ENCODE measurements at regions of chr10 and their contacts with region 1.

Region 1: DNA sequence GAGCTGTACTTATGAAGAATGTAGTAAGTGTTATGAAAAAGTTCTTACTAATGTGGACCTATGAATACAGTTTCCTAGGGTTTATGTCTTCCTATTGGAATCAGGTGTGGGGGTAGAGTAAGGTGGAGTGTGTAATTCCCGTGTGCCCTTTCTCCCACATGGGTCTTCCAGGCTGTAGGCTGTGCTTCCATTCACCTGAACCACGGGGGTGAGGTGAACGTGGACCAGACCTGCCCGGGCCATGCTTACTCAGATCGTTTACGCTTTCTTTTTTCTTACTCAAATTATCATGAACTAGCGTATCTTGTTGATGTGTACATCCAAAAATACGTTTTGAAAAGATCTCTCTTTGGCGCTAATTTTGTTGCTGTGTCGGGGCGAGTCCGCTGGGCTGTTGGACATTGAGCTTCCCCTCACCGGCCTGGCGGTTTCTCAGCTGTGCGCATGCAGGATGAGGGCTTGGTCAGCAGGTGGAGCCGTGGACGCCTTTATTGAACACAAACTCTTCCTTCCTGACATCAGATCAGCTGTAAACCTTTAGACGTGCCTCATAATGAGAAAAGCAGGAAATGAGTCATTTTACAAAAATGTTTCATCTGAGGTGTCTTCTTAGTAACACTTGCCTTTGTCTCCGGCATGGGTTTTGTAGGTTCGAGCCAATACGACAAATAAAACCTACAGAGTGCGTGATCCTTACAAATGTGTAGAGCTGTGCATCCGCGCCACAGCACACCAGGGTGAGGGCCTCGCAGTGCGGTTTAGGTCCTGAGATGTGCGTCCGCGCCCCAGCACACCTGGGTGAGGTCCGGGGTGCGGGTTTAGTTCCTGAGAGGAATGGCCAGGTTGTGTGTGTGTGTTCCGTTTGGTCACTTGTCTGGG is 53.8 kb downstream of the WDR37 start:
- DNase-seq: peak; percentile 71
- H3K4me3 Mint-ChIP-seq: peak overlapping the region; percentile 39
- H3K27ac Mint-ChIP-seq: peak overlapping the region; percentile 75
- H3K4me1 Mint-ChIP-seq: peaks cover 54% of the 10 kb centered on the region
- H3K27me3 Mint-ChIP-seq: no peaks in the 10 kb centered on the region

Region 2: GRCh38 chr10:974038-974784 is 135.8 kb before region 1 on chr10:
- intact Hi-C with region 1: no loop called
- DNase-seq: no peak
- H3K4me3 Mint-ChIP-seq: no peak overlapping the region
- H3K27ac Mint-ChIP-seq: no peak overlapping the region
- H3K4me1 Mint-ChIP-seq: no peaks in the 10 kb centered on the region
- H3K27me3 Mint-ChIP-seq: peaks cover 7% of the 10 kb centered on the region

Region 3: GRCh38 chr10:1094112-1095057 is 15.6 kb before region 1 on chr10:
- intact Hi-C with region 1: loop called (anchors 1 kb)
- DNase-seq: peak; percentile 28
- H3K4me3 Mint-ChIP-seq: no peak overlapping the region
- H3K27ac Mint-ChIP-seq: no peak overlapping the region
- H3K4me1 Mint-ChIP-seq: peaks cover 5% of the 10 kb centered on the region
- H3K27me3 Mint-ChIP-seq: peaks cover 3% of the 10 kb centered on the region

Region 4: GRCh38 chr10:1123198-1123597 is 13.2 kb after region 1 on chr10:
- intact Hi-C with region 1: no loop called
- DNase-seq: no peak
- H3K4me3 Mint-ChIP-seq: no peak overlapping the region
- H3K27ac Mint-ChIP-seq: no peak overlapping the region
- H3K4me1 Mint-ChIP-seq: peaks cover 20% of the 10 kb centered on the region
- H3K27me3 Mint-ChIP-seq: no peaks in the 10 kb centered on the region

Region 5: GRCh38 chr10:1287971-1288401 is 178.0 kb after region 1 on chr10:
- intact Hi-C with region 1: no loop called
- DNase-seq: no peak
- H3K4me3 Mint-ChIP-seq: no peak overlapping the region
- H3K27ac Mint-ChIP-seq: no peak overlapping the region
- H3K4me1 Mint-ChIP-seq: no peaks in the 10 kb centered on the region
- H3K27me3 Mint-ChIP-seq: peaks cover 8% of the 10 kb centered on the region

Region 6: DNA sequence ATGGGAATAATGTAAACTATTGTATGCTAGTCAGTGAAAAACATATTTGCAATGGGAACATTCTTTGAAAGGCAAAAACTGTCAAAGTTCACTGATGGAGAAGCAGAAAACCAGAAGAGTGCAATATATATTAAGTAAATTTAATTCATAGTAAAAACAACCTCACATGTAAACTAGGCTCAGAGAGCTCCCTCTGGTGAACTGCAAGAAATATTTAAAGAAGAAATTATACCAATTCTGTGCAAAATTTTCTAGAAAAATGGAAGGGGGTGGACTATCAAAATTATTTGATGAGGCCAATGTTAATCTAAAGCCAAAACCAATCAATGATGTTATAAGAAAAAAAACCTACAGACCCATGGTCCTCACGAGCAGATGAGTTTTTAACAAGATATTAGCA is 277.4 kb after region 1 on chr10:
- intact Hi-C with region 1: loop called (anchors 1 kb)
- DNase-seq: no peak
- H3K4me3 Mint-ChIP-seq: no peak overlapping the region
- H3K27ac Mint-ChIP-seq: no peak overlapping the region
- H3K4me1 Mint-ChIP-seq: no peaks in the 10 kb centered on the region
- H3K27me3 Mint-ChIP-seq: peaks cover 36% of the 10 kb centered on the region

Region 7: DNA sequence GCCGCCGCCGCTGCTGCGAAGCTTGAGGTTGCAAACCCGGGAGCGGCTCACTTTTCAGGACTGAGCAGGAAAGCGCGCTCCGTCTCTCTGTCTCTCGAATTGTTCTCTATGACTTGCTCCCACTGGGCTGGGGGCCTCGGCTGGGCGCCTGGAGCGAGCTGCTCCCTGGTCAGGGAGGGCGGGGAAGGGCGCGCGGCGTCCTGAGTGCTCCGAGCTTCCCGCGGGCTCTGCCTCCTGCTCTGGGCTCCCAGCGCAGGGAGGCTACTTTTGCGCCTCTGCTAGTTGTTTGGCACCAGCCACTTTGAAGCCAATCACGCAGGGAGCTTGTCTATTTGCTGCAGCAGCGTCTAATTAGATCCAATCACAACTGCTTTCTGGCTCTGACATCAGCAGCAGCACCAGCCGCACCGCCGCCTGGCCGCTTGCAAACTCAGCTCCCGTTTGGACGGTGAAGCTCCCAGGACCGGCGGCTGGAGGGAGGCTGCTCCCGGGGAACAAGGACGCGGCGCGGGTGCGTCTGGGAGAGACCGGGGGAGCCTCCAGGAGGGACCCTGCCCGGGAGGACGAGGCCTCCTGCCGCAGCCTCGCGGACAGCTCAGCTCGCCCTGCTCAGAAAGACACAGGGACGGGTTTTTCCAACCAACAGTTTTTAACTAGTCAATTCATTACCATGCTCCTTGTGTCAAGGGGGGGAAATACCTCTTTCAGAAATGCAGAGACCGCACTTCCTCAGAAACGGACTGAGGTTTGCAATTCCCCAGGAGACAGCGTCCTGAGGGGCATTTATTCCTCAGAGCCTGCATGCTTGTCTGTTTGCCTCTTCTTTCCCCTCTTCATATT is 627.4 kb after region 1 on chr10 and contains the start of gene ADARB2:
- intact Hi-C with region 1: loop called (anchors 10 kb)
- DNase-seq: peak; percentile 3
- H3K4me3 Mint-ChIP-seq: peak within 1 kb of the TSS; percentile 76
- H3K27ac Mint-ChIP-seq: no peak within 1 kb of the TSS
- H3K4me1 Mint-ChIP-seq: peaks cover 6% of the 10 kb centered on the region
- H3K27me3 Mint-ChIP-seq: peaks cover 68% of the 10 kb centered on the region
- total RNA-seq, gene ADARB2: 0.05 and 0.20 TPM in 2 replicates

Region 8: DNA sequence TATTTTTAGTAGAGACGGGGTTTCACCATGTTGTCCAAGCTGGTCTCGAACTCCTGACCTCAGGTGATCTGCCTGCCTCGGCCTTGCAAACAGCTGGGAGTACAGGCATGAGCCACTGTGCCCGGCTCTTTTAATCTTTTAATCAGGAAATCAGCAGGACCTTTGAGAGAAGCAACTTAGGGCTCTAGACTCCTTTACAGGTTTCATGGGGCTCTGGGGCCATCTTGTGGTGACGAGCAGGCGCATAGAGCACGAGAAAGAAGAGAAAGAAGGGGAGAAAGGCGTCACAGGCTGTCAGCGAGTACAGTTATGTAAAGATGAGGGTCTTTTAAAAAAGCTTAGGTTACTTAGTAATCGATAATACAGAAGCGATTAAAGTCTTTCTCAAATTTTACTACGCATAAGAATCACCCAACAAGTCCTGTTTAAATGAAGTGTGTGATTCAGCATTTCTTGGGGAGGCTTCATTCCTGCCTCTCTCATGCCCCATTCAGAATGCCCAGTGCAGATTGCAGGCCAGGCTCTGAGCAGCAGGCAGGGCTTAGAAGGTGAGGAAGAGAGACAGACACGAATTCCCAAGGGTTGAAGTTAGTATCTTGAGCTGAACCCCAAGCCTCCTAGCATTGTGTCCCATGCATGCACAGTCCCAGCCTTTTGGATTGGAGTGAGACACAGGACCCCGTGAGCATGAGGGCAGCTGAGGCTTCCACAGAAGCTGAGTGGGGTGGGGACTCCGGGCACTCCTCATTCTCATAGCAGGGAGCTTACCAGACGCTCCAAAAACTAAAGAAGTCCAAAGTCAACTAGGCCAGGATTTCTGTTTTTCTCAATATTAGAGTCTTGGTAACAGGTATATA is 1933.7 kb after region 1 on chr10:
- intact Hi-C with region 1: loop called (anchors 1 kb)
- DNase-seq: peak; percentile 13
- H3K4me3 Mint-ChIP-seq: no peak overlapping the region
- H3K27ac Mint-ChIP-seq: no peak overlapping the region
- H3K4me1 Mint-ChIP-seq: no peaks in the 10 kb centered on the region
- H3K27me3 Mint-ChIP-seq: peaks cover 6% of the 10 kb centered on the region